ENCODE measurements at regions of chr6 and their contacts with region 1.

Region 1: DNA sequence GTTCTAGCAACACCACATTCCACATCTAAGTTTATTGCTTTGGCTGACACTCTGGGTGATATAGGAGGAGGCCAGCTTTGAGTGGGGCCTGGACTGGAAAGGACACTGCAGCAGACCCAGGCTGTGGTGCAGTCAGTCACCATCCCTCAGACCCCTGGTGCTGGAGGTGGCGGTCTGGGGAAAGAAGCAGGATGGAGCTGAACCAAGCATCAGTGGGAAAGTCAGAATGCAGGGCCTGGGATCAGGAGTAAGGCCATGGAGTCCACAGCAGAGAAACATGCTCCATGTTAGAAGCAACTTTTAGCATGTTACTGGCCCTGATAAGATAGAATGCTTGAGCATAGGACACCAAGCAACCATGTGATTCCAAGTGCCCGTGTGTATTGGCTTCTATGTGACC is 5.9 kb downstream of the HLA-A start:
- DNase-seq: no peak
- ATAC-seq: peak; percentile 5
- H3K4me3 ChIP-seq: no peak overlapping the region
- H3K4me3 Mint-ChIP-seq: peak overlapping the region in 7 of 10 donors; percentile 1 to 97 (median 33)
- H3K27ac ChIP-seq: no peak overlapping the region
- H3K27ac Mint-ChIP-seq: peak overlapping the region in 8 of 9 donors; percentile 32 to 100 (median 70)
- H3K4me1 ChIP-seq: peaks cover 22 to 41% of the 10 kb centered on the region in 2 donors
- H3K4me1 Mint-ChIP-seq: peaks cover 34 to 78% (median 67%) of the 10 kb centered on the region in 7 donors
- H3K27me3 ChIP-seq: no peaks in the 10 kb centered on the region
- H3K27me3 Mint-ChIP-seq: no peaks in the 10 kb centered on the region

Region 2: GRCh38 chr6:29887819-29888776 is 60.2 kb before region 1 on chr6:
- CTCF ChIA-PET with region 1: no interaction called
- POLR2A ChIA-PET with region 1: interaction called, 17 read pairs
- intact Hi-C with region 1: loop called in 1 of 2 experiments (anchors 1 kb)
- DNase-seq: peak in 8 of 9 donors; percentile 36 to 89 (median 72)
- ATAC-seq: peak; percentile 91
- H3K4me3 ChIP-seq: peak overlapping the region; percentile 73
- H3K4me3 Mint-ChIP-seq: peak overlapping the region in 9 of 10 donors; percentile 79 to 95 (median 94)
- H3K27ac ChIP-seq: peak overlapping the region; percentile 94
- H3K27ac Mint-ChIP-seq: peak overlapping the region in 8 of 9 donors; percentile 72 to 98 (median 94)
- H3K4me1 ChIP-seq: peaks cover 3 to 7% of the 10 kb centered on the region in 2 donors
- H3K4me1 Mint-ChIP-seq: peaks cover 0 to 27% (median 20%) of the 10 kb centered on the region in 7 donors
- H3K27me3 ChIP-seq: no peaks in the 10 kb centered on the region
- H3K27me3 Mint-ChIP-seq: peaks cover 0 to 18% (median 0%) of the 10 kb centered on the region in 5 donors

Region 3: DNA sequence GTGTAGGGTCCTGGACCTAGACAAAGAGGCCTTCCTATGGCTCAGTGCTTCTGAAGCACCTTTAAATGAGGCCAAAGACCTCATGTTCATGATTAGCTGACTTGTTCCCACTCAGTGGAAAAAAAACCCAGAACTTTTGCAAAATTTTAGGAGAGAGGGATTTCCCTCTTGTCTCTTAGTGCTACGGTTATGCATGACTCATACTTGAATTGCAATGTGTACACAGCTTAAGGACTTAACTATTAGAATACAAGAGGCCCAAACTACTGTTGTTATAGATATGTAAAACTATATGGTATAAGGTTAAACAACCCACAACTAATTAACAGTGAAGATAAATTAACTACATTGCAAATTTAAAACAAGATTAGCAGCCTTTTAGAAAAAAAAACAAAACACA is 38.3 kb before region 1 on chr6:
- CTCF ChIA-PET with region 1: no interaction called
- POLR2A ChIA-PET with region 1: no interaction called
- intact Hi-C with region 1: no loop called
- DNase-seq: no peak
- ATAC-seq: no peak
- H3K4me3 ChIP-seq: no peak overlapping the region
- H3K4me3 Mint-ChIP-seq: no peak overlapping the region
- H3K27ac ChIP-seq: no peak overlapping the region
- H3K27ac Mint-ChIP-seq: no peak overlapping the region
- H3K4me1 ChIP-seq: no peaks in the 10 kb centered on the region
- H3K4me1 Mint-ChIP-seq: peaks cover 0 to 13% (median 0%) of the 10 kb centered on the region in 7 donors
- H3K27me3 ChIP-seq: no peaks in the 10 kb centered on the region
- H3K27me3 Mint-ChIP-seq: peaks cover 0 to 20% (median 14%) of the 10 kb centered on the region in 5 donors

Region 4: GRCh38 chr6:29958921-29959320 is 10.6 kb after region 1 on chr6:
- CTCF ChIA-PET with region 1: interaction called, 4 read pairs
- POLR2A ChIA-PET with region 1: interaction called, 251 read pairs
- intact Hi-C with region 1: loop called in 1 of 2 experiments (anchors 1 kb)
- DNase-seq: no peak
- ATAC-seq: no peak
- H3K4me3 ChIP-seq: no peak overlapping the region
- H3K4me3 Mint-ChIP-seq: no peak overlapping the region
- H3K27ac ChIP-seq: no peak overlapping the region
- H3K27ac Mint-ChIP-seq: peak overlapping the region in 1 of 9 donors; percentile 70
- H3K4me1 ChIP-seq: no peaks in the 10 kb centered on the region
- H3K4me1 Mint-ChIP-seq: peaks cover 0 to 28% (median 14%) of the 10 kb centered on the region in 7 donors
- H3K27me3 ChIP-seq: no peaks in the 10 kb centered on the region
- H3K27me3 Mint-ChIP-seq: peaks cover 0 to 2% (median 0%) of the 10 kb centered on the region in 5 donors

Region 5: DNA sequence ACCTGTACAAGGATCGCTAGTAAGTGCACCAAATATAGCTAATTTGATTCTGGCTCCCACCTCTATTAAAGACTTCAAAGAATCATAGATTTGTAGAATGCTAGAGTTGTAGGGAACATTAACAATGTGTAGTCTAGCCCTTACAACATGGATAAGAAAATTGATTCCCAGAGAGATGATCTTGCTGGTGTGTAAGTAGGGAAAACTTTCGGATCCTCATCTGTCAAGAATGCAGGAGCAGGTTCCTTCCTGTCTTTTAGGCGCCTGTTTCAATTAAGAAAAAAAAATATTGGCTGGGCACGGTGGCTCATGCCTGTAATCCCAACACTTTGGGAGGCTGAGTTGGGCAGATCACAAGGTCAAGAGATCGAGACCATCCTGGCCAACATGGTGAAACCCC is 139.6 kb after region 1 on chr6:
- CTCF ChIA-PET with region 1: no interaction called
- POLR2A ChIA-PET with region 1: no interaction called
- intact Hi-C with region 1: no loop called
- DNase-seq: no peak
- ATAC-seq: no peak
- H3K4me3 ChIP-seq: no peak overlapping the region
- H3K4me3 Mint-ChIP-seq: no peak overlapping the region
- H3K27ac ChIP-seq: no peak overlapping the region
- H3K27ac Mint-ChIP-seq: no peak overlapping the region
- H3K4me1 ChIP-seq: no peaks in the 10 kb centered on the region
- H3K4me1 Mint-ChIP-seq: peaks cover 0 to 6% (median 0%) of the 10 kb centered on the region in 7 donors
- H3K27me3 ChIP-seq: peaks cover 0 to 8% of the 10 kb centered on the region in 2 donors
- H3K27me3 Mint-ChIP-seq: peaks cover 40 to 66% (median 53%) of the 10 kb centered on the region in 5 donors

Region 6: GRCh38 chr6:30955367-30956042 is 1007.2 kb after region 1 on chr6:
- CTCF ChIA-PET with region 1: no interaction called
- POLR2A ChIA-PET with region 1: no interaction called
- intact Hi-C with region 1: no loop called
- DNase-seq: peak; percentile 49 to 76 (median 63)
- ATAC-seq: peak; percentile 84
- H3K4me3 ChIP-seq: peak overlapping the region; percentile 62
- H3K4me3 Mint-ChIP-seq: peak overlapping the region; percentile 59 to 92 (median 86)
- H3K27ac ChIP-seq: peak overlapping the region; percentile 50
- H3K27ac Mint-ChIP-seq: peak overlapping the region in 8 of 9 donors; percentile 77 to 93 (median 89)
- H3K4me1 ChIP-seq: peaks cover 5 to 12% of the 10 kb centered on the region in 2 donors
- H3K4me1 Mint-ChIP-seq: peaks cover 3 to 37% (median 27%) of the 10 kb centered on the region in 7 donors
- H3K27me3 ChIP-seq: no peaks in the 10 kb centered on the region
- H3K27me3 Mint-ChIP-seq: peaks cover 5 to 81% (median 7%) of the 10 kb centered on the region in 5 donors